ENCODE measurements at regions of chr20 and their contacts with region 1.

Region 1: GRCh38 chr20:462199-462991 is at the start of gene TBC1D20:
- DNase-seq: peak; percentile 86
- H3K4me3 Mint-ChIP-seq: peak within 1 kb of the TSS; percentile 96
- H3K27ac Mint-ChIP-seq: peak within 1 kb of the TSS; percentile 86
- H3K4me1 Mint-ChIP-seq: peaks cover 41% of the 10 kb centered on the region
- H3K27me3 Mint-ChIP-seq: no peaks in the 10 kb centered on the region
- total RNA-seq, gene TBC1D20: 16.2 to 17.4 TPM

Region 2: GRCh38 chr20:297098-297924 is 165.1 kb before region 1 on chr20 and contains the start of gene ZCCHC3:
- CTCF ChIA-PET with region 1: no interaction called
- intact Hi-C with region 1: loop called (anchors 1 kb)
- DNase-seq: peak; percentile 87
- H3K4me3 Mint-ChIP-seq: peak within 1 kb of the TSS; percentile 100
- H3K27ac Mint-ChIP-seq: peak within 1 kb of the TSS; percentile 100
- H3K4me1 Mint-ChIP-seq: peaks cover 30% of the 10 kb centered on the region
- H3K27me3 Mint-ChIP-seq: no peaks in the 10 kb centered on the region
- total RNA-seq, gene ZCCHC3: 13.6 to 15.6 TPM

Region 3: GRCh38 chr20:438571-439469 is 23.6 kb before region 1 on chr20:
- CTCF ChIA-PET with region 1: interaction called, 3 read pairs
- intact Hi-C with region 1: loop called (anchors 1 kb)
- DNase-seq: peak; percentile 79
- H3K4me3 Mint-ChIP-seq: peak overlapping the region; percentile 74
- H3K27ac Mint-ChIP-seq: peak overlapping the region; percentile 91
- H3K4me1 Mint-ChIP-seq: peaks cover 55% of the 10 kb centered on the region
- H3K27me3 Mint-ChIP-seq: no peaks in the 10 kb centered on the region

Region 4: DNA sequence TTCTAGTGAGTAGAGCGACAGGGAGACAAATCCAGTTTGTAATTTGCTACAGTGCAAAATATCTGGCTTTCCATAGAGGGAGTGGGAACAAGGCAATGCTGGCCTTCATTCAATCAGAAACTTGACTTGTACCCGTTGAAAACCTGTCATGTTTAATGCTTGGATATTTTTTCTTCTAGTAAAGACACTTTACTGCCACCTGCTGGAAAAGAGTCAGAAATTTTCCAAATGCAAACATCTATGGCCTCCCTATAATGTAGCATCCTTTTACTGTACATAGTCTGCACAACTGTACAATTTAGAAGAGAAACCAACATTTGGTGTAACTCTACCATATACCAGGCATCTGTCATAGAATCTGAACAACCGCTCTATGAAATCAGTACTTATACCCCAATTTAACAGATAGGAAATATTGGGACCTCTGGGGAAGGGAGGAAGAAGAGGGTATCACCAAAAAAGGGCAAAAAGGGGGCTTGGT is 16.6 kb after region 1 on chr20:
- CTCF ChIA-PET with region 1: interaction called, 5 read pairs
- intact Hi-C with region 1: loop called (anchors 2 kb)
- DNase-seq: peak; percentile 41
- H3K4me3 Mint-ChIP-seq: no peak overlapping the region
- H3K27ac Mint-ChIP-seq: no peak overlapping the region
- H3K4me1 Mint-ChIP-seq: peaks cover 22% of the 10 kb centered on the region
- H3K27me3 Mint-ChIP-seq: no peaks in the 10 kb centered on the region

Region 5: GRCh38 chr20:492159-492558 is 29.8 kb after region 1 on chr20:
- CTCF ChIA-PET with region 1: no interaction called
- intact Hi-C with region 1: no loop called
- DNase-seq: no peak
- H3K4me3 Mint-ChIP-seq: no peak overlapping the region
- H3K27ac Mint-ChIP-seq: no peak overlapping the region
- H3K4me1 Mint-ChIP-seq: no peaks in the 10 kb centered on the region
- H3K27me3 Mint-ChIP-seq: no peaks in the 10 kb centered on the region

Measured in activated naive CD4-positive, alpha-beta T cell treated with anti-CD3 and anti-CD28 coated beads for 36 hours (primary cell).